ENCODE measurements at regions of chr12 and their contacts with region 1.

Region 1: GRCh38 chr12:106247674-106248311 is at the start of gene CKAP4:
- DNase-seq: peak; percentile 38 to 77
- H3K4me3 ChIP-seq: peak within 1 kb of the TSS; percentile 87
- H3K27ac ChIP-seq: peak within 1 kb of the TSS; percentile 50
- H3K4me1 ChIP-seq: peaks cover 29% of the 10 kb centered on the region
- H3K27me3 ChIP-seq: no peaks in the 10 kb centered on the region
- CTCF ChIP-seq: no peak
- total RNA-seq, gene CKAP4: 73.6 and 81.5 TPM in 2 replicates

Region 2: GRCh38 chr12:105960319-105961083 is 287.3 kb before region 1 on chr12:
- CTCF ChIA-PET with region 1: no interaction called
- POLR2A ChIA-PET with region 1: no interaction called
- intact Hi-C with region 1: no loop called
- DNase-seq: peak; percentile 5 to 90
- H3K4me3 ChIP-seq: no peak overlapping the region
- H3K27ac ChIP-seq: 0 out of 2 replicates have a peak overlapping the region, but pooled peaks have one; percentile 11
- H3K4me1 ChIP-seq: peaks cover 21% of the 10 kb centered on the region
- H3K27me3 ChIP-seq: no peaks in the 10 kb centered on the region
- CTCF ChIP-seq: no peak

Region 3: GRCh38 chr12:106282457-106283097 is 34.8 kb after region 1 on chr12:
- CTCF ChIA-PET with region 1: no interaction called
- POLR2A ChIA-PET with region 1: interaction called, 29 read pairs
- intact Hi-C with region 1: no loop called
- DNase-seq: peak; percentile 15 to 62
- H3K4me3 ChIP-seq: no peak overlapping the region
- H3K27ac ChIP-seq: no peak overlapping the region
- H3K4me1 ChIP-seq: peaks cover 5% of the 10 kb centered on the region
- H3K27me3 ChIP-seq: no peaks in the 10 kb centered on the region
- CTCF ChIP-seq: peak; percentile 86

Region 4: GRCh38 chr12:106296193-106296877 is 48.5 kb after region 1 on chr12:
- CTCF ChIA-PET with region 1: no interaction called
- POLR2A ChIA-PET with region 1: interaction called, 6 read pairs
- intact Hi-C with region 1: loop called (anchors 1 kb)
- DNase-seq: peak; percentile 38 to 98
- H3K4me3 ChIP-seq: no peak overlapping the region
- H3K27ac ChIP-seq: peak overlapping the region; percentile 84
- H3K4me1 ChIP-seq: peaks cover 44% of the 10 kb centered on the region
- H3K27me3 ChIP-seq: no peaks in the 10 kb centered on the region
- CTCF ChIP-seq: no peak

Region 5: GRCh38 chr12:106302401-106303201 is 54.8 kb after region 1 on chr12 and contains the start of gene TCP11L2:
- CTCF ChIA-PET with region 1: no interaction called
- POLR2A ChIA-PET with region 1: interaction called, 8 read pairs
- intact Hi-C with region 1: loop called (anchors 1 kb)
- DNase-seq: peak; percentile 59 to 79
- H3K4me3 ChIP-seq: peak within 1 kb of the TSS; percentile 99
- H3K27ac ChIP-seq: peak within 1 kb of the TSS; percentile 96
- H3K4me1 ChIP-seq: peaks cover 66% of the 10 kb centered on the region
- H3K27me3 ChIP-seq: no peaks in the 10 kb centered on the region
- CTCF ChIP-seq: no peak
- total RNA-seq, gene TCP11L2: 34.6 and 35.1 TPM in 2 replicates

Region 6: DNA sequence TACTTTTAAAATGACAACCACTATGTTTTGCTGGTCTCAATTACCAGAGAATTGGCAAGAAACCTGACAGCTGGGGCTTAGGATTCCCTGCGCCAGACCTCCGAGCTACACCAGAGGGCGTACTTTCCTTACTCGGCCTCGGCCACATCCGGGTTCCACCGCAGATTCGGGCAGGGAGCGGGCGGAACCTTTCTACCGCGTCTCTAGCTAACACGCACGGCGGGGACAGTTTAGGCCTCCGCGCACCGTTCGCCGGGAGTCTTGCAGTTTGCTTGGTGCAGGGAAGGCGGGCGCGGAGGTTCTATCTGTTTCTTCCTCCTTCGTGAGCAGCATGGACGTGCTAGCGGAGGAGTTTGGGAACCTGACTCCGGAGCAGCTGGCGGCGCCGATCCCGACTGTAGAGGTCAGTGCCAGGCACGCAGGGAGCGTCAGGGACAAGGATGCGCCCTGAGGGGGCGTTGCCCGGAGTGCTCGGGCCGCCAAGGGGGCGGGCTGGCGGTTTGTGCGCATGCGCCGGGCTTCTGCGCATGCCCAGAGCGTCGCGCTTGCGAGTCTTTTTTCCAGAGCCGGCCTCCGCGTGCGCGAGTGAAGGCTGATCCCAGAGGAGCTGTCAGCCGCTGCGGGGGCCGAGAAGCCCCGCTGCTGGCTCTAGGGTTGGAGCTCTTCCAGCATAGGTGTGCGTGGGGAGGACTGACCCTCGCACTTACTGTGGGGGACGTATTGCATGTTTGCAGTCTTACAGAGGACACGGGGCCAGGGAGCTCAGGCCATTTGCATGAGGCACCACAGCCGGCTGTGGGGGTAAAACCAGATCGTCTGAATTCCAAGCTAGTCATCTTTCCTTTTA is 110.0 kb after region 1 on chr12 and contains the start of gene POLR3B:
- CTCF ChIA-PET with region 1: no interaction called
- POLR2A ChIA-PET with region 1: no interaction called
- intact Hi-C with region 1: loop called (anchors 2 kb)
- DNase-seq: peak; percentile 84 to 92
- H3K4me3 ChIP-seq: peak within 1 kb of the TSS; percentile 66
- H3K27ac ChIP-seq: peak within 1 kb of the TSS; percentile 95
- H3K4me1 ChIP-seq: peaks cover 30% of the 10 kb centered on the region
- H3K27me3 ChIP-seq: no peaks in the 10 kb centered on the region
- CTCF ChIP-seq: peak; percentile 88
- total RNA-seq, gene POLR3B: 8.4 and 12.9 TPM in 2 replicates

Region 7: DNA sequence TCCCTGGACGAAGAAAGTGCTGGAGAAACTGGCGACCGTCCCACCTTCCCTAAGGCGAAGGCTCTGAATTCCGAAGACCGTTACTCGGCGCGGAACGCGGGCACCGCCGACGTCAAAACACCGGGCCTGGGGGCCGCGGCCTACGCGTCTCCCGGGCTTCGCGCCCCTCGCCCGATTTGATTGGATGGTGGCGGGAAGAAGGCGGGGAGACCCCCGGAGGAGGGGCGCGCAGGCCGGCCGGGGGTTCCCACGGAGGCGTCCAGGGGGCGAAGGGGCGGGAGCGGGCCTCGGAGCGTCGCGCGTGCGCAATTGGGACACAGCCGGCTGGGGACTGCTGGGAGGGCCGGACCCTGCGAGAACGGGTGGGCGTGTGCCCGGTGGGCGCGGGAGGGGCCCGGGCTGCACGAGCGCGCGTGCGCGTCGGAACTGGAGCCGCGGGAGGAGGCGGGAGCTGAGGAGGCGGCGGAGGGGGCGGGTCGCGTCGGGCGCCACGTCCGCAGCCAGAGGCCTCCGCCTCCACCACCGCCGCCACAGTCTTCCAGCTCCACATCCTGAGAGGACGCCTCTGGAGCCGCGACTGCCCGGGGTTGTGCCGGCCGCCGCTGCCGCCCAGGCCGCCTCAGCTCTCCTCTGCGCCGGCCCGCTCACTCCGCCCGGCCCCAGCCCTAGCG is 707.7 kb after region 1 on chr12 and contains the start of gene TMEM263:
- CTCF ChIA-PET with region 1: no interaction called
- POLR2A ChIA-PET with region 1: interaction called, 3 read pairs
- intact Hi-C with region 1: loop called (anchors 5 kb)
- DNase-seq: peak; percentile 59 to 91
- H3K4me3 ChIP-seq: peak within 1 kb of the TSS; percentile 83
- H3K27ac ChIP-seq: peak within 1 kb of the TSS; percentile 57
- H3K4me1 ChIP-seq: peaks cover 17% of the 10 kb centered on the region; the same call in 1 of the 2 replicates
- H3K27me3 ChIP-seq: peaks cover 13% of the 10 kb centered on the region; the same call in 1 of the 2 replicates
- CTCF ChIP-seq: no peak
- total RNA-seq, gene TMEM263: 32.9 and 33.2 TPM in 2 replicates

Measured in PC-9 (cell line).